A673 (cell line): ENCODE measurements at regions of chr10 and their contacts with region 1.

Region 1: DNA sequence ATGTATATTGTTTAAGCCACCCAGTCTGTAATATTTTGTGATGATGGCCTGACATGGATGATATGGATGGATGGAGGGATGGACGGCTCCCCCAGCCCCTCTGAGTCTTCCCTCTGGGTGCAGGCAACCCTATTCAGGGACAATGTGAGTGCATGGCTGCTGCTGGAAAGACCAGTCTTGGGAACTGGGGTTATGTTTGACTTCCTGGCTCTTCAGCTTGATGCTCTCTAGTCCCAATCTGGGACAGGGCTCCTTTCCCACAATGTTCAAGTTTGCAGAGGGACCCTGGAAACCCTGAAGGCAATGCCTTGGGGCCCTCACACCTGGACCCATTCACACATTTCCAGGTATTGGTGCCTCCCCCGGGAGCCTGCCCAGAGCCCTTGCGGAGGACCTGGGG is 52.3 kb upstream of the RET start:
- DNase-seq: no peak
- H3K4me3 ChIP-seq: no peak overlapping the region
- H3K27ac ChIP-seq: no peak overlapping the region
- H3K4me1 ChIP-seq: peaks cover 9% of the 10 kb centered on the region
- H3K27me3 ChIP-seq: no peaks in the 10 kb centered on the region
- CTCF ChIP-seq: no peak

Region 2: DNA sequence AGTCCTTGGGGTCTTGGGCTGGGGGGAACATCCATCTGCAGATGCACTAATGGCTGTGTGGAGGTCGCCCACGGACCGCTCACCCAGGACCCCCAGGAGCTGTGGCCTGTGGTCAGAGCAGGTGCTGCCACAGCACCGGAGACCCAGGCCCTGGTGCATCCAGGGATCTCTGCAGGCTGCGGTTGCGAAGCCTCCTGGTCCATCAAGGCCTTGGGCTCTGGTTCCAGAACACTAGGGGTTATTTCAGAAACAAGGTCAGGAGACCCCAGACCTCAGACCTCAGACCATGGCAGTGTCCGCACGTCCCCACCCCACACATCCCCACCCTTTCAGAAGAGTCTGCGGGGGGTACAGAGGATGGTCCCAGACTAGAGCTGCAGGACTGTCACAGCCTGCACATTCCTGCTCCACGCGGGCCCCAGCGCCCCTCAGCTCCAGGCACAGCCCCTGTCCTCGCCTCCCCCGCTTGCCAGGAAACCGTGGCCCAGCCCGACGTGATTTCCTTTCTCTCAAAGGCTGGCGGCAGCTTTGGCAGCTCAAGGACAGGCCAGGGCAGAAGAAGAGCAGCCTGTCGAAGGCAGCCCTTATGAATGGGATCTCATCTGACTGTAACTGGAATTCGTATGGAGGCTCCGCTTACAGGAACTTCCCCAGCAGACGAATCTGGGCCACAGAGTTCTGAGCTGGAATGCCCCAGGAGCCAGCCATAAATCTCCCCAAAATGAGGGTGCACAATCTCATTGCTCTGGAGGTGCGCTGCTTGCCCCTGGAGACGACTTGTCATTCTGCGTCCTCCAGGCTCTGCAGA is 83.8 kb before region 1 on chr10:
- CTCF ChIA-PET with region 1: no interaction called
- POLR2A ChIA-PET with region 1: no interaction called
- intact Hi-C with region 1: no loop called
- DNase-seq: no peak
- H3K4me3 ChIP-seq: no peak overlapping the region
- H3K27ac ChIP-seq: no peak overlapping the region
- H3K4me1 ChIP-seq: no peaks in the 10 kb centered on the region
- H3K27me3 ChIP-seq: no peaks in the 10 kb centered on the region
- CTCF ChIP-seq: no peak

Region 3: GRCh38 chr10:43044450-43044921 is 20.0 kb after region 1 on chr10:
- CTCF ChIA-PET with region 1: no interaction called
- POLR2A ChIA-PET with region 1: interaction called, 26 read pairs
- intact Hi-C with region 1: loop called (anchors 1 kb)
- DNase-seq: peak; percentile 94
- H3K4me3 ChIP-seq: no peak overlapping the region
- H3K27ac ChIP-seq: peak overlapping the region; percentile 82
- H3K4me1 ChIP-seq: peaks cover 44% of the 10 kb centered on the region
- H3K27me3 ChIP-seq: no peaks in the 10 kb centered on the region
- CTCF ChIP-seq: no peak

Region 4: GRCh38 chr10:43071865-43072650 is 47.5 kb after region 1 on chr10:
- CTCF ChIA-PET with region 1: interaction called, 14 read pairs
- POLR2A ChIA-PET with region 1: no interaction called
- intact Hi-C with region 1: no loop called
- DNase-seq: no peak
- H3K4me3 ChIP-seq: no peak overlapping the region
- H3K27ac ChIP-seq: no peak overlapping the region
- H3K4me1 ChIP-seq: peaks cover 14% of the 10 kb centered on the region
- H3K27me3 ChIP-seq: no peaks in the 10 kb centered on the region
- CTCF ChIP-seq: no peak